RWPE1 (cell line): ENCODE measurements at regions of chr5 and their contacts with region 1.

Region 1: DNA sequence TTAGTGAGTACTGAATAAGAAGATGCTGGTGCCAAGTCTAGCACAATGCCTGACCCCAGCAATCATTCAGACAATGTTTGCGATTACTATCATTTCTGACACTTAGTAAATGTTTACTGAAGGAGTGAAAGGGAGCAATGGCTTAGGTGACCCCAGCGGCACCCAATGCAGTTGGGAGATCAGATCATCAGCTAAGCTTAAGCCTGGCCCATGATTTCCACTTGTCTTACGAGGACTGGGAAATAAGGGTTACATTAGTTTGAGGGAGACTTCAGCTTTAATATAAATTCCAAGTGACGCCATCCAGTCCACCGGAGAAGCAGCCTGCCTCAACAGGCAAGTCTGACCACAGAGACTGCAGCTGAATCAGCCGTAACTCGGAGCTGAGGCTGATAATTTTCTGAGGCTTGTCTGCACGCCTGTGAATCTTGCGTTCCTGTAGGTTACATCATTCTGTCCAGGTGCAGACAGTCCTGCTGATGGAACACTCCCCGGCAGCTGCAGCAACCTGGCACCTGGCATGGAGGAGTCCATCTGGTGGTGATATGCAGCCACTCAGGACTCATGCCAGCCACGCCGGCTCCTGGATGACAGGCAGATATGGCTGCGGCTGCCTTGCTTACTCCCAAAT is 34.9 kb upstream of the FGF1 start:
- DNase-seq: peak; percentile 96
- H3K27ac ChIP-seq: peak overlapping the region; percentile 94
- CTCF ChIP-seq: no peak; the same call in 1 of the 2 replicates

Region 2: GRCh38 chr5:142748568-142749249 is 28.0 kb after region 1 on chr5:
- CTCF ChIA-PET with region 1: interaction called, 12 read pairs
- POLR2A ChIA-PET with region 1: no interaction called
- DNase-seq: peak; percentile 51
- H3K27ac ChIP-seq: no peak overlapping the region
- CTCF ChIP-seq: no peak; the same call in 1 of the 2 replicates

Region 3: GRCh38 chr5:142881076-142881783 is 160.5 kb after region 1 on chr5:
- CTCF ChIA-PET with region 1: interaction called, 88 read pairs
- POLR2A ChIA-PET with region 1: no interaction called
- DNase-seq: no peak
- H3K27ac ChIP-seq: no peak overlapping the region
- CTCF ChIP-seq: no peak